ENCODE measurements at regions of chr15 and their contacts with region 1.

Region 1: GRCh38 chr15:43749690-43750345 is 3.6 kb downstream of the PDIA3 start:
- DNase-seq: peak; percentile 70
- H3K4me3 Mint-ChIP-seq: peak overlapping the region; percentile 68
- H3K27ac Mint-ChIP-seq: peak overlapping the region; percentile 81
- H3K4me1 Mint-ChIP-seq: peaks cover 41% of the 10 kb centered on the region
- H3K27me3 Mint-ChIP-seq: no peaks in the 10 kb centered on the region

Region 2: DNA sequence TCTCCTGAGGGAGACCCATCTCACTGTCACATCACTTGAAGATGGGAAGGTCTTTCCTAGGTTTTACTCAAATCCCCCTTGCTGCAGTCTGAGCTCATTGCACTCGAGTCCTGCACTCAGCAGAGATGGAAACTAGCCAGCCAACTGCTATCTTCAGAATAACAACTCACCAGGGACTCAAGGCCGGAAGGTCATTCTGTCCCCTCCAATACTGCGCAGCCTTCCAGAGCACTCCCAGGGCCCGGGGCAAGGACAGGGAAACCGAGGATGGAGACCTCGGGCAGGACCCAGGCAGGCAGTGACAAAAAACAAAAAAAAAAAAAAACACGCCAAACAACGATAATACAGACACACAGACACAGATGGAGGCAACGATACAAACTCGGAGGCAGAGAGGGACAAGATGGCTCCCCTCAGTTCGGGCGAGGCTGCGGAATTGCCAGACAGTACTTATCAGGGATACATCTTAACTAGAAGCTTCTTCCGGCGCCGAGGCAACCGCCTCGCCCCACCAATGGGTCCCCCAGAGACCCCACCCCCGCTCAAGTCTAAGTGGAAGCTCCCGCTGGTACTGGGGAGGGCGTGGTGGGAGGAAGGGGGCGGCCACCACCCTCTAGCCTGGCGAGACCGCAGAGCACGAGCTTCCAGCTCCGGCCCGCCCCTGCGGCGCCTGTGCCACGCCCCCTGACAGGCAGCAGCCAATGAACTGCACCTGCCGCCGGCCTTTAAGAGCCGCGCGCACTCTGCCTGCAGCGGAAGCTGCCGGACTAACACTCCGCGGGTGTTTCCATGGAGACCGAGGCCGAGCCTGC is 239.4 kb before region 1 on chr15:
- CTCF ChIA-PET with region 1: no interaction called
- POLR2A ChIA-PET with region 1: interaction called, 3 read pairs
- intact Hi-C with region 1: loop called (anchors 10 kb)
- DNase-seq: peak; percentile 98
- H3K4me3 Mint-ChIP-seq: peak overlapping the region; percentile 86
- H3K27ac Mint-ChIP-seq: peak overlapping the region; percentile 85
- H3K4me1 Mint-ChIP-seq: peaks cover 35% of the 10 kb centered on the region
- H3K27me3 Mint-ChIP-seq: no peaks in the 10 kb centered on the region

Region 3: GRCh38 chr15:43776718-43777583 is 27.1 kb after region 1 on chr15 and contains the start of gene ELL3:
- CTCF ChIA-PET with region 1: interaction called, 11 read pairs
- POLR2A ChIA-PET with region 1: interaction called, 7 read pairs
- intact Hi-C with region 1: loop called (anchors 2 kb)
- DNase-seq: peak; percentile 93
- H3K4me3 Mint-ChIP-seq: peak within 1 kb of the TSS; percentile 85
- H3K27ac Mint-ChIP-seq: peak within 1 kb of the TSS; percentile 84
- H3K4me1 Mint-ChIP-seq: peaks cover 24% of the 10 kb centered on the region
- H3K27me3 Mint-ChIP-seq: no peaks in the 10 kb centered on the region
- total RNA-seq, gene ELL3: 2.4 to 2.9 TPM

Region 4: GRCh38 chr15:43824302-43825246 is 74.8 kb after region 1 on chr15 and contains the start of gene MFAP1:
- CTCF ChIA-PET with region 1: no interaction called
- POLR2A ChIA-PET with region 1: interaction called, 4 read pairs
- intact Hi-C with region 1: loop called (anchors 2 kb)
- DNase-seq: peak; percentile 96
- H3K4me3 Mint-ChIP-seq: peak within 1 kb of the TSS; percentile 99
- H3K27ac Mint-ChIP-seq: peak within 1 kb of the TSS; percentile 97
- H3K4me1 Mint-ChIP-seq: peaks cover 56% of the 10 kb centered on the region
- H3K27me3 Mint-ChIP-seq: no peaks in the 10 kb centered on the region
- total RNA-seq, gene MFAP1: 37.2 to 38.0 TPM

Region 5: DNA sequence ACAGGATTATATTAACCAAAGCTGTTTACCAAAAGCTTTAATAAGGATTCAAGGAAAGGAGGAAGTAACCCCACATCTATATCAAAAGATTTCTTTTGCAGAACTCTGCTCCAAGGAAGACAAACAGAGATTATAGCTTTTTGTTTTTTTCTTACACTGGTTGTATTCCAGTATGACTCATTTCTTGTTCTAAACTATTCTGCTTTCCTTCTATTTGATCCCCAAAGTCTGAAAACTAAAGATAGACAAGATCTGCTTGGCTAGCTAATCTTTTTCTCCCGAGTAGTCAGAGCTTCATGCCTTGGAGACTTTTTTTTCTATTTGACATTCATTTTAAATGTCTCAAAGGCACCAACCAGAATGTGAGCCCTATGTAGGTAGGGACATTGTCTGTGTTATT is 482.0 kb after region 1 on chr15:
- CTCF ChIA-PET with region 1: no interaction called
- POLR2A ChIA-PET with region 1: no interaction called
- intact Hi-C with region 1: no loop called
- DNase-seq: no peak
- H3K4me3 Mint-ChIP-seq: no peak overlapping the region
- H3K27ac Mint-ChIP-seq: no peak overlapping the region
- H3K4me1 Mint-ChIP-seq: no peaks in the 10 kb centered on the region
- H3K27me3 Mint-ChIP-seq: no peaks in the 10 kb centered on the region